Common myeloid progenitor, CD34-positive (primary cell): ENCODE measurements at regions of chr3 and their contacts with region 1.

Region 1: DNA sequence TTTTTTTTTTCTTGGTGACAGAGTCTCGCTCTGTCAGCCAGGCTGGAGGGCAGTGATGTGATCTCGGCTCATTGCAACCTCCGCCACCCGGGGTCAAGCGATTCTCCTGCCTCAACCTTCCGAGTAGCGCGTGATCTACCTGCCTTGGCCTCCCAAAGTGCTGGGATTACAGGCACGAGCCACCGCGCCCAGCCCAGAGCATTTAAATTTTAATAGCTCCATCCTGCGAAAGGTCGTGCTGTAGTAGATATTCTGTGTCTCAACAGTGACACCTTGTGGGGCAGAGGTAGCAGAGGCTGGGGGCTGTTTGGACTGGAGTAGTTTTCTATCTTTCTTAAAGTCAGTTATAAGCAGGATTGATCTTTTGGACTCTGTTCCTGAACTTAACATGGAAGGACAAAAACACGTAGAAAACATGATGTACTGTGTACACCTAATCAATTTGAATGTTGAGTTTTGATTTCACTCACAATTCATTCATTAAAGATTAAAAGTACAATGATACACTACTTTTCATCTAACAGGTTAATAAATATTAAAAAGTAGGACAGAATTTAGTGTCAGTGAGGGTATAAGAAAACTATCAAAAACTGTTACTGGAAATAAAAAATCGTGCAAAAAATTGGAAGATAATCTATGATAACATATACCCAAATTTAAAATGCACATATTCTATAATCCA is 11.0 kb upstream of the PDCD6IP start:
- DNase-seq: peak; percentile 71 to 85 (median 81)
- H3K4me3 ChIP-seq: peak overlapping the region in 3 of 7 experiments; percentile 4 to 68 (median 41)
- H3K27ac ChIP-seq: no peak overlapping the region
- H3K4me1 ChIP-seq: peaks cover 0 to 17% (median 14%) of the 10 kb centered on the region in 4 experiments
- H3K27me3 ChIP-seq: no peaks in the 10 kb centered on the region

Region 2: DNA sequence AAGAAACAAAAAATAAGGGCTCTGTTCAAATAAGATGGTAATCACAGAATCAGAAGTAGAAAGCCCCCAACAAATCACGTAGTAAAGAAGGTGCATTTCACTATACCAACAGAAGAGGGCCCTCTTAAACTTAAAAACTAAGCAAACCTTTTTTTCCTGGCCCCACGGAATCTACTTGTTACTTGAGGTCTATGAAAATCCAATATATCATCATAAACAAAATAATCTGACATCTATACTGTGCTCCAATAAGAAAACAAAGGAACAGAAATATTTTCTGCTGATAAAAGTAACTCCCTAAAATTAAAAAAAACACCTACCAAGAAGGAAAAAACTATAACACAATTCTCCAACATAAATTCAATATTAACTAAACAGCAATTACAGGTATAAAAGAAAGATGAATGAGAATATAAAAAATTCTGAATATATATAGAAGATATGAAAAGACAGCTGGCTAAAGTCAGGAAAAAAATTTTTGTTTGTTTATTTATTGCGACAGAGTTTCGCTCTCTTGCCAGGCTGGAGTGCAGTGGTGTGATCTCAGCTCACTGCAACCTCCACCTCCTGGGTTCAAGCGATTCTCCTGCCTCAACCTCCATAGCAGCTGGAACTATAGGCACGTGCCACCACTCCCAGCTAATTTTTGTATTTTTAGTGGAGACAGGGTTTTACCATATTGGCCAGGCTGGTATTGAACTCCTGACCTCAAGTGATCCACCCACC is 151.2 kb before region 1 on chr3:
- CTCF ChIA-PET with region 1: interaction called, 30 read pairs
- POLR2A ChIA-PET with region 1: no interaction called
- DNase-seq: peak; percentile 79 to 89 (median 88)
- H3K4me3 ChIP-seq: no peak overlapping the region
- H3K27ac ChIP-seq: no peak overlapping the region
- H3K4me1 ChIP-seq: no peaks in the 10 kb centered on the region
- H3K27me3 ChIP-seq: no peaks in the 10 kb centered on the region

Region 3: DNA sequence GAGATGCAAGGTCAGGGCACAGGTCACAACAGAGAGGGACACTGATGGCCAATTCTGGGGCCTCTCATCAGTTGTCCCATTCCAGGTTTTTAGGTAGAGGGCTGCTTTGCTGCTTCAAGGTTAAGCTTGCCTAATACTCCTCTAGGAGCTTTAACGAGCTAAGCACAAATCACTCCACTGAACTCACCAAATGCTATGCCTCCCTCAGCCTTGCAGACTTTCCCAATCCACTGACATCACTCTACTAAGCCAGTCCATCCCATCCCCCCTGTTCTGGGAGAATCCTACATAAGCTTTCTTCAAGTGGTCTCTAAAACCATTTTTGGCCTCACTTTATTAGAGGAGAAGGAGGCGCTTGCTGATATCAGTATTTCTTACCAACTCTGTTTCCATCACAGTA is 13.8 kb before region 1 on chr3:
- CTCF ChIA-PET with region 1: interaction called, 50 read pairs
- POLR2A ChIA-PET with region 1: no interaction called
- DNase-seq: no peak
- H3K4me3 ChIP-seq: no peak overlapping the region
- H3K27ac ChIP-seq: no peak overlapping the region
- H3K4me1 ChIP-seq: no peaks in the 10 kb centered on the region
- H3K27me3 ChIP-seq: no peaks in the 10 kb centered on the region

Region 4: GRCh38 chr3:33798411-33799201 is 11.1 kb after region 1 on chr3 and contains the start of gene PDCD6IP:
- CTCF ChIA-PET with region 1: interaction called, 24 read pairs
- POLR2A ChIA-PET with region 1: no interaction called
- DNase-seq: peak; percentile 90 to 93 (median 93)
- H3K4me3 ChIP-seq: peak within 1 kb of the TSS; percentile 86 to 99 (median 94)
- H3K27ac ChIP-seq: peak within 1 kb of the TSS; percentile 85 to 91
- H3K4me1 ChIP-seq: peaks cover 11 to 35% (median 22%) of the 10 kb centered on the region in 4 experiments
- H3K27me3 ChIP-seq: no peaks in the 10 kb centered on the region